Activated CD8-positive, alpha-beta T cell treated with anti-CD3 and anti-CD28 coated beads for 36 hours (primary cell): ENCODE measurements at regions of chr5 and their contacts with region 1.

Region 1: DNA sequence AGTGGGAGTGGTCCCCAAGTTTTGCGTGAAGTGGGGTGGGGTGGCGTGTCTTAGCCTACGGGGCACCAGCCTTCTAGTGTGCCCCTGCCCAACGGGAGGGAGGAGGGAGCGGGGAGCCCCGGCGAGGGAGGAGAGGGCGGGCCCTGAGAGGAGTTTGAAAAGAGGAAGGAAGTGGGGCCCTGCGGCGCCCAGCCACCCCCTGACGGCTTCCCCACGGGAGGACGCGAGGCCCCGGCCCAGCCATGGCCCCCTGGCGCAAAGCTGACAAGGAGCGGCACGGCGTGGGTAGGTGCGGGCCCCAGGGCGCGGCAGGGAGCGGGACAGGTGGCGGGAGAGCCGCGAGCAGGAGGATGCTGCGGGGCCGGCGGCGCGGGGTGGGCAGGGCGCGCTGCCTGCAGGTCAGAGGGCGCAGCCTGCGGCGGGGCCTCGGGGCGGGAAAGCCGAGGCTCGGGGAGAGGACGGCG is at the start of gene DOCK2:
- DNase-seq: peak; percentile 85
- ATAC-seq: peak; percentile 82
- H3K4me3 Mint-ChIP-seq: peak within 1 kb of the TSS; percentile 82
- H3K27ac Mint-ChIP-seq: peak within 1 kb of the TSS; percentile 96
- H3K4me1 Mint-ChIP-seq: peaks cover 46% of the 10 kb centered on the region
- H3K27me3 Mint-ChIP-seq: no peaks in the 10 kb centered on the region
- CTCF ChIP-seq: no peak
- total RNA-seq, gene DOCK2: 180 to 181 TPM

Region 2: DNA sequence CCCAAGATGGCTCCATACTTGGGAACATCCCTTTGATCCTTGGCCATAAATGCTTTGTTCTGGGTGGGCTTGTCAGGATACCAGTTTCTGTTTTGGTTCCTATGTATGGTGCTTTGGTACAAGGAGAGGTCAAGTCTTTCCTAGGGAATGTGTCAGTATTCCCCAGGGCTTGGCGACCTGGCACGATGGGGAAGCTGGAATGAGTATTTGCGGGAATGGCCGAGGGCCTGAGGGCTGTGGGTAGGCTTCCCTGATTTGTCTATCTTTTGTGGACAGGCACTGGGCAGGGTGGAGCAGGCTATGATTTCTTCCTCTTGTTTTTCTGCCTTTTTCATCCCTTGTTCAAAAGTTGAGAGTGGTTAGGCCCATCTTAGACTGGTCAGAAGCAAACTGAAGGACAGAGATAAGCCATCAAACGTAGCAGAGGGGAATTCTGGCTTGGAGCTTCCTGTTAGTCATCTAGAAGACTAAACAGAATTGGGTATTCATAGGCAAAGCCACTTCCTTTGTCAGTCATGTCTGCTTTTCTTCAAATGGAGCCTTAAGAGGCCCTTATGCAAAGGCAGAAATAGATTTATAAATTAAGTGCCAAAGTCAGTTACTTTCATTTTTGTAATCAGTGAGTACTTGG is 13.7 kb after region 1 on chr5:
- CTCF ChIA-PET with region 1: interaction called, 5 read pairs
- POLR2A ChIA-PET with region 1: interaction called, 82 read pairs
- intact Hi-C with region 1: no loop called
- DNase-seq: peak; percentile 52
- ATAC-seq: peak; percentile 72
- H3K4me3 Mint-ChIP-seq: peak overlapping the region; percentile 42
- H3K27ac Mint-ChIP-seq: peak overlapping the region; percentile 85
- H3K4me1 Mint-ChIP-seq: peaks cover 96% of the 10 kb centered on the region
- H3K27me3 Mint-ChIP-seq: no peaks in the 10 kb centered on the region
- CTCF ChIP-seq: no peak

Region 3: DNA sequence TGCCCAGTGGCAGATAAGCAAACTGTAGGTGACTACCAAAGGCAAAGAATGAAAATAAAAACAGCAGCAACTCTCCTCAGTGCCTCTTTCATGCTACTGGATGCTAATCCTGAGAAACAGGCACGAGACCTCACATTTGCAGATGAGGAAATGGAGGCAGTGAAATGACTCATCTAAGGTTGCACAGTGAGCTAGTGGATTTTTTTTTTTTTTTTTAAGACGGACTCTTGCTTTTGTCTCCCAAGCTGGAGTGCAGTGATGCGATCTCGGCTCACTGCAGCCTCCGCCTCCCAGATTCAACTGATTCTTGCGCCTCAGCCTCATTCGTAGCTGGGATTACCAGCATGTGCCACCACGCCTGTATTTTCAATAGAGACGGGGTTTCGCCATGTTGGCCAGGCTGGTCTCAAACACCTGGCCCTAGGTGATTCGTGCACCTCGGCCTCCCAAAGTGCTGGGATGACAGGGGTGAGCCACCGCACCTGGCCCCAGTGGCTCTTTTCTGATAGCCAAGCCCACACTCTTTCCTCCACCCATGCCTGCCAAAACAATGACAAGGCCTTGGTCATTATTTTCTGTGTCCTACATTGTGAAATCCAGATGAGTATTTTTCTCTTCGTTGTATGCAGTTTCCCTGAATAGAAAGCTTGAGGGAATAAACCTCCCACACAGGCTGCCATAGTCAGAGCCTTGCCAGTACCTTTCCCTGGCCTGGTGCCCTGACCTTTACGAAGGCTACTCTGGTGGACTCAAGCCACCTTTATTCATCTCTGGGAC is 19.2 kb after region 1 on chr5:
- CTCF ChIA-PET with region 1: interaction called, 4 read pairs
- POLR2A ChIA-PET with region 1: interaction called, 82 read pairs
- intact Hi-C with region 1: no loop called
- DNase-seq: peak; percentile 40
- ATAC-seq: peak; percentile 47
- H3K4me3 Mint-ChIP-seq: peak overlapping the region; percentile 12
- H3K27ac Mint-ChIP-seq: peak overlapping the region; percentile 70
- H3K4me1 Mint-ChIP-seq: peaks cover 72% of the 10 kb centered on the region
- H3K27me3 Mint-ChIP-seq: no peaks in the 10 kb centered on the region
- CTCF ChIP-seq: no peak